CD4-positive, alpha-beta memory T cell (primary cell): ENCODE measurements at regions of chr1 and their contacts with region 1.

Region 1: DNA sequence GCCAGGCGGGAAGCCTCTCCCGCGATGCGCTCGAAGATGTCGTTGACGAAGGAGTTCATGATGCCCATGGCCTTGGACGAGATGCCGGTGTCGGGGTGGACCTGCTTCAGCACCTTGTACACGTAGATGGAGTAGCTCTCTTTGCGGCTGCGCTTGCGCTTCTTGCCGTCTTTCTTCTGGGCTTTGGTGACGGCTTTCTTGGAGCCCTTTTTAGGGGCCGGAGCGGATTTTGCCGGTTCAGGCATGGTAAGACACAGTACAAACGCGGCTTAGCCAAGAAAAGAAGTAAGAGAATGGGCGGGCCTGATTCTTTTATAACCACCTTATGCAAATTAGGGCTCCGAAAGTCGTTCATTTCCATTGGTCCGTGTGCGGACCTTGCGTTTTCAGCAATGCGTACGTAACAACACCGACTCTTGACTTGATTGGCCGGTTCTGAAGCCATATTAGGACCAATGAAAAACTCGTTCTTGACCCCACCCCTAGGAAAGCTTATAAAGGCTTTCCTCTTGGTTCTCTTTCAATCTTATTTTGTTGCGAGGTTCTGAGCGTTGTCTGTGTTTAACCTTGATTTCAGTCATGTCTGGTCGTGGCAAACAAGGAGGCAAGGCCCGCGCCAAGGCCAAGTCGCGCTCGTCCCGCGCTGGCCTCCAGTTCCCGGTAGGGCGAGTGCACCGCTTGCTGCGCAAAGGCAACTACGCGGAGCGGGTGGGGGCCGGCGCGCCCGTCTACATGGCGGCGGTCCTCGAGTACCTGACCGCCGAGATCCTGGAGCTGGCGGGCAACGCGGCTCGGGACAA is 12.8 kb upstream of the BOLA1 start:
- DNase-seq: peak; percentile 94 to 97 (median 96)
- H3K4me3 ChIP-seq: peak overlapping the region; percentile 75 to 82
- H3K4me3 Mint-ChIP-seq: no peak overlapping the region
- H3K27ac ChIP-seq: peak overlapping the region; percentile 88
- H3K27ac Mint-ChIP-seq: no peak overlapping the region
- H3K4me1 ChIP-seq: peaks cover 27% of the 10 kb centered on the region
- H3K4me1 Mint-ChIP-seq: peaks cover 8 to 19% (median 10%) of the 10 kb centered on the region in 4 donors
- H3K27me3 ChIP-seq: no peaks in the 10 kb centered on the region
- H3K27me3 Mint-ChIP-seq: no peaks in the 10 kb centered on the region

Region 2: DNA sequence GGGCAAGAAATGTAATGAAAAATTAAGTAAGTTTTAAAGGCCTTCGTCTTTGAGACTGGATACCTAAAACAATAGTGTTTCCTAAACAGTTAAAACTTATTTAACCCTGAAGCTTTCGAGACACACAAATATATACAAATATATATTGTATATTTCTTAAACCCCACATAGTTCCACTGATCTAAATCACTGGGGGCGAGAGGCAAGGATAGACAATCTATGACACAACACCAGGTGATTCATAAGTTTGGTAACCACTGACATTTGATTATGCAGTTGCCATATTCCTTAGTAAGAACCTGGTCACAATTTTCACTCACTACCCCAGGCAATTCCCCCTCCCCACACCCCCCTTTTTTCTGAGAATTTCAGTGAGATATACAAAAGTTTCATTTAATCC is 42.5 kb before region 1 on chr1:
- CTCF ChIA-PET with region 1: interaction called, 15 read pairs
- POLR2A ChIA-PET with region 1: interaction called, 526 read pairs
- intact Hi-C with region 1: no loop called
- DNase-seq: peak in 3 of 5 donors; percentile 11 to 59 (median 21)
- H3K4me3 ChIP-seq: peak overlapping the region; percentile 56 to 74
- H3K4me3 Mint-ChIP-seq: peak overlapping the region; percentile 84 to 93 (median 89)
- H3K27ac ChIP-seq: peak overlapping the region; percentile 69
- H3K27ac Mint-ChIP-seq: peak overlapping the region; percentile 85 to 96 (median 89)
- H3K4me1 ChIP-seq: peaks cover 46% of the 10 kb centered on the region
- H3K4me1 Mint-ChIP-seq: peaks cover 41 to 57% (median 47%) of the 10 kb centered on the region in 4 donors
- H3K27me3 ChIP-seq: no peaks in the 10 kb centered on the region
- H3K27me3 Mint-ChIP-seq: no peaks in the 10 kb centered on the region

Region 3: GRCh38 chr1:149916193-149916897 is 29.7 kb after region 1 on chr1:
- CTCF ChIA-PET with region 1: no interaction called
- POLR2A ChIA-PET with region 1: interaction called, 32 read pairs
- intact Hi-C with region 1: no loop called
- DNase-seq: no peak
- H3K4me3 ChIP-seq: peak overlapping the region in 1 of 2 donors; percentile 59
- H3K4me3 Mint-ChIP-seq: peak overlapping the region; percentile 42 to 94 (median 90)
- H3K27ac ChIP-seq: no peak overlapping the region
- H3K27ac Mint-ChIP-seq: peak overlapping the region; percentile 42 to 92 (median 75)
- H3K4me1 ChIP-seq: peaks cover 25% of the 10 kb centered on the region
- H3K4me1 Mint-ChIP-seq: peaks cover 17 to 49% (median 29%) of the 10 kb centered on the region in 4 donors
- H3K27me3 ChIP-seq: no peaks in the 10 kb centered on the region
- H3K27me3 Mint-ChIP-seq: no peaks in the 10 kb centered on the region

Region 4: DNA sequence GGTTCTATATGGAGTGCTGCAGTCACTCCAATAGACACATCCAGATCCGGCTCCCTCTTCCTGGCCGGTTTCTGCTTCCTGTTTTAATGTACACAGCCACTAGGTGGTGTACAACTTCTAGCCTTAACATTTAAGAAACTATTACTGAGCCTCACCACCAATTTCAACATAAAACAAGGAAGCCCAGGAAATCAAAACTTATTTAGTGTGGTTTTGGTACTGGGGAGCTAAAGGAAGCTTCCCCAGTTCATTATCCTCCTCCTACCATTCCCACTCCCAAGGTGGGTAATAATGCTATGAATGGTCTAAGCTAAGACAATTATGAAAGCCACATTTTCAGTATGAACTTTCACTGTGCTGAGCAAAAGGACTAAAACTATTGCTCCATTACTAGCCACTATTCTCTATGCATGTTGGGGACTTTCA is 75.5 kb after region 1 on chr1:
- CTCF ChIA-PET with region 1: interaction called, 3 read pairs
- POLR2A ChIA-PET with region 1: interaction called, 18 read pairs
- intact Hi-C with region 1: no loop called
- DNase-seq: peak in 4 of 5 donors; percentile 57 to 63 (median 59)
- H3K4me3 ChIP-seq: no peak overlapping the region
- H3K4me3 Mint-ChIP-seq: peak overlapping the region in 1 of 8 donors; percentile 20
- H3K27ac ChIP-seq: no peak overlapping the region
- H3K27ac Mint-ChIP-seq: peak overlapping the region in 3 of 7 donors; percentile 22 to 65 (median 64)
- H3K4me1 ChIP-seq: peaks cover 16% of the 10 kb centered on the region
- H3K4me1 Mint-ChIP-seq: peaks cover 10 to 23% (median 16%) of the 10 kb centered on the region in 4 donors
- H3K27me3 ChIP-seq: no peaks in the 10 kb centered on the region
- H3K27me3 Mint-ChIP-seq: no peaks in the 10 kb centered on the region

Region 5: GRCh38 chr1:150067184-150068036 is 180.8 kb after region 1 on chr1 and contains the start of gene VPS45:
- CTCF ChIA-PET with region 1: interaction called, 4 read pairs
- POLR2A ChIA-PET with region 1: interaction called, 45 read pairs
- intact Hi-C with region 1: no loop called
- DNase-seq: peak; percentile 69 to 82 (median 75)
- H3K4me3 ChIP-seq: peak within 1 kb of the TSS; percentile 70 to 88
- H3K4me3 Mint-ChIP-seq: peak within 1 kb of the TSS; percentile 91 to 98 (median 96)
- H3K27ac ChIP-seq: peak within 1 kb of the TSS; percentile 65
- H3K27ac Mint-ChIP-seq: peak within 1 kb of the TSS; percentile 91 to 97 (median 94)
- H3K4me1 ChIP-seq: peaks cover 30% of the 10 kb centered on the region
- H3K4me1 Mint-ChIP-seq: peaks cover 27 to 42% (median 35%) of the 10 kb centered on the region in 4 donors
- H3K27me3 ChIP-seq: no peaks in the 10 kb centered on the region
- H3K27me3 Mint-ChIP-seq: no peaks in the 10 kb centered on the region
- total RNA-seq, gene VPS45: 32.1 to 38.5 TPM

Region 6: GRCh38 chr1:150162862-150163706 is 276.5 kb after region 1 on chr1:
- CTCF ChIA-PET with region 1: no interaction called
- POLR2A ChIA-PET with region 1: interaction called, 11 read pairs
- intact Hi-C with region 1: no loop called
- DNase-seq: no peak
- H3K4me3 ChIP-seq: no peak overlapping the region
- H3K4me3 Mint-ChIP-seq: peak overlapping the region in 5 of 8 donors; percentile 0 to 61 (median 34)
- H3K27ac ChIP-seq: no peak overlapping the region
- H3K27ac Mint-ChIP-seq: peak overlapping the region in 5 of 7 donors; percentile 34 to 83 (median 53)
- H3K4me1 ChIP-seq: peaks cover 40% of the 10 kb centered on the region
- H3K4me1 Mint-ChIP-seq: peaks cover 34 to 52% (median 42%) of the 10 kb centered on the region in 4 donors
- H3K27me3 ChIP-seq: no peaks in the 10 kb centered on the region
- H3K27me3 Mint-ChIP-seq: no peaks in the 10 kb centered on the region

Region 7: GRCh38 chr1:150363426-150364230 is 477.0 kb after region 1 on chr1 and contains the start of gene RPRD2:
- CTCF ChIA-PET with region 1: no interaction called
- POLR2A ChIA-PET with region 1: interaction called, 31 read pairs
- intact Hi-C with region 1: no loop called
- DNase-seq: peak; percentile 99 to 100 (median 99)
- H3K4me3 ChIP-seq: peak within 1 kb of the TSS; percentile 98 to 100
- H3K4me3 Mint-ChIP-seq: peak within 1 kb of the TSS; percentile 94 to 100 (median 99)
- H3K27ac ChIP-seq: peak within 1 kb of the TSS; percentile 96
- H3K27ac Mint-ChIP-seq: peak within 1 kb of the TSS; percentile 97 to 100 (median 99)
- H3K4me1 ChIP-seq: peaks cover 27% of the 10 kb centered on the region
- H3K4me1 Mint-ChIP-seq: peaks cover 22 to 49% (median 28%) of the 10 kb centered on the region in 4 donors
- H3K27me3 ChIP-seq: no peaks in the 10 kb centered on the region
- H3K27me3 Mint-ChIP-seq: no peaks in the 10 kb centered on the region
- total RNA-seq, gene RPRD2: 60.0 to 61.0 TPM

Region 8: DNA sequence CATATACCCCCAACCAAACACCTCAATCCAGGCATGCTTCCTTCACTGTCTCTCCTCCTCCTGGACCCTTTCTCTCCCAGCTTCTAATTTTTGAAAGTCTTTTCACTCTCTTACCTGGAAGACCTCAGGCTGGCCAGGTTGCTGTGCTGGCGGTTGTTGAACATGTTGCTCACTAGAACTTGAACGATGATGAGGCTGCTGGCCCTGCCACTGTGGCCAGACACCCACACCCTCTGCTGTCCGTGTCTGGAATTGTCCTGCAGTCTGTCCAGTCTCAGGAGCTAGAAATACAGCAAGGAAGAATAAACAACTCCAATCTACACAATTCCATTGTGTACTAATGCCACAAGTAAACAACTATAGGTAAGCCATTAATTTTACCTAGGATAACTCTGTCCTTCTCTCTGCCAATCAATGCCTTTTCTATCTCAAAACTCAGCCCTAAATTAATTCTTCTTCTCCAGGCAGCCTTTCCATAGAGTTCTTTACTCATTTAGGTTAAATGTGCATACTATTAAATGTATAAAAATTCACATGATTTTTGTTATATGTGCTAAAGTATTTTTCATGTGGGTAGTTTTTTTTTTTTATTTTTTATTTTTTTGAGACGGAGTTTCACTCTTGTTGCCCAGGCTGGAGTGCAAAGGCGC is 926.6 kb after region 1 on chr1:
- CTCF ChIA-PET with region 1: no interaction called
- POLR2A ChIA-PET with region 1: no interaction called
- intact Hi-C with region 1: no loop called
- DNase-seq: peak in 1 of 5 donors; percentile 4
- H3K4me3 ChIP-seq: no peak overlapping the region
- H3K4me3 Mint-ChIP-seq: no peak overlapping the region
- H3K27ac ChIP-seq: no peak overlapping the region
- H3K27ac Mint-ChIP-seq: no peak overlapping the region
- H3K4me1 ChIP-seq: no peaks in the 10 kb centered on the region
- H3K4me1 Mint-ChIP-seq: peaks cover 0 to under 1% (median 0%) of the 10 kb centered on the region in 4 donors
- H3K27me3 ChIP-seq: no peaks in the 10 kb centered on the region
- H3K27me3 Mint-ChIP-seq: no peaks in the 10 kb centered on the region